A549 (cell line): ENCODE measurements at regions of chr12 and their contacts with region 1.

Region 1: DNA sequence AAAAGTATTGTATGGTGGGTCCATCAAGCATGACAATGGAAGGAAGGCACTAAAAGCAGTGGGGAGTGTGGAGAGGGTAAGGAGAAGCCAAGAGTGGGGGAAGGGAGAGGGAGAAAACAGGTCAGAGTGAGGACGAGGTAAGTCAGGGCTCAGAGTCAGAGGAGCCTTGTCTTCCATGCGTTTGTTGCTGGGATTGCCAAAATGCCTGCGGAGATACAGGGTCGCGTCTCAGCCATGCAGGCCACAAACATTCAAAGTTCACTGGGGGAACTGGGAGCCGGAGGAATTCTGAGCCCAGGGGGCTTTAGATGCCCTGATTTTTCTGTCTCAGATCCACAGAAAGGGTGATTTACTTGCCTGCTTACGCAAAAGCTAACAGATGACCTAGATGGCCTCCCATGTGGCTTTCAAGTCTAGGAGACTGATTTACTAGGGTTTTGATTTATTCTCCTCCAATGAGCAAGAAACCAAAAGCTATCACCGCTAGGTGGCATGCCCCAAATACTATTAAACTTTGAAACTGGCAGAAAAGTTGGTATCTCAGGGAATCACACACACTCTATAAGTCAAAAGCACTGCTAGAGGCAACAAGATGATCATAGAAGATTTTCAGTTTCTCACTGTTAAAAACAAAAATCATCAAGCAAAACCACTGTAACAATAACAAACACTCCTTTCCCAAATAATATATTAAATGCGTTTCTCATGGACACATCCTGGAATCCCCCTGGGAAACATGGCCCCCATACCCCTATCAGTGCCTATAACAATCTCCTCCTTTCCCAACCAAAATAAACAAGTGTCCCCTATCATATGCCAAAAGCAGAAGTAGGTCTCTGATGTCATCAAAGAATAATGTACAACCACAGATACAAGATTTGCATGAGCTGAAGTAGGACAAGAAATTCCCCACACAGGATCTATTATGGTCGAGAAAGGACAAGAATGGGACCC is 26.6 kb upstream of the MDM1 start:
- DNase-seq: peak; percentile 52 to 88
- ATAC-seq: peak; percentile 84 to 92
- H3K4me3 ChIP-seq: no peak overlapping the region
- H3K27ac ChIP-seq: peak overlapping the region; percentile 56 to 70
- H3K4me1 ChIP-seq: peaks cover 13% of the 10 kb centered on the region
- CTCF ChIP-seq: peak; percentile 82
- EP300 ChIP-seq: no peak
- POLR2A ChIP-seq: no peak
- RAD21 ChIP-seq: peak; percentile 83 to 87

Region 2: DNA sequence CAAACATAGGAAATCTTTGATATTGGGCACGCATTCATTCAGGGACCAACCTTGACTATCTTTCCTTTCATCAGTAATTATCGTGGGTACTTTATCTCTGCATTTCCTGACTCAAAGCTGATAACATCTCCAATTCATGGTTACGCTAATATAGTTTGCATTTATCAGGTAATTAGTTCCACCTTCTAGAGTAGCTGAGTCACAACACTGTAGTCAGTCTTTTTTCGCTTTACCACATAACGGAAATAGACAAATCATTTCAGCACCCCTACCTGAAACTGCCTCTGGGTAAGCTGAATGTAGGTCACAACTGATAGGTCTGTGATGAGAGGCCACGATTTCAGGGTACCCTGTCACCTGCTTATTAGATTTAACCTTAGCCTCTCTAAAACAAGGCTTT is 68.7 kb before region 1 on chr12:
- CTCF ChIA-PET with region 1: no interaction called
- POLR2A ChIA-PET with region 1: no interaction called
- DNase-seq: no peak
- ATAC-seq: no peak
- H3K4me3 ChIP-seq: no peak overlapping the region
- H3K27ac ChIP-seq: no peak overlapping the region
- H3K4me1 ChIP-seq: no peaks in the 10 kb centered on the region
- CTCF ChIP-seq: no peak
- EP300 ChIP-seq: no peak
- POLR2A ChIP-seq: no peak
- RAD21 ChIP-seq: no peak

Region 3: DNA sequence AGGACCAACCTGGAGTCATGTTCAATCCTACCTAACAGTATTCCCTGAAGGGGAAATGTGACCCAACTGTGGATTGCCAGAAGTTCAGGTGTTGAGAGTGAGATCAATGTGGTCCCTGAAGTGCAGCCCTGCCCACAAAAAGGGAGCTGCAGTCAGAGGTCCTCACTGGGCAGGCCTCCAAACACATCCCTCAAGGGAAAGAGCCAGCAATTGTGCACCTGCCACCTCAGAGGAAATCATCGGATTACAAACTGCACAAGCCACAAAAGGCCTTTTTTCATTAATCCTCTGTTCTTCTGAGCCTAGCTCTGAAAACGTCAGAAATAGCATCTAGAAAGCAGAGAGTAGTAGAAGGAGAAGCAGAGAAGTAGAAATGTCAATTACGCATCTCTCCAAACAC is 15.8 kb before region 1 on chr12:
- CTCF ChIA-PET with region 1: interaction called, 24 read pairs
- POLR2A ChIA-PET with region 1: no interaction called
- DNase-seq: no peak
- ATAC-seq: no peak
- H3K4me3 ChIP-seq: no peak overlapping the region
- H3K27ac ChIP-seq: no peak overlapping the region
- H3K4me1 ChIP-seq: no peaks in the 10 kb centered on the region
- CTCF ChIP-seq: no peak
- EP300 ChIP-seq: no peak
- POLR2A ChIP-seq: no peak
- RAD21 ChIP-seq: no peak

Region 4: GRCh38 chr12:68610370-68611093 is 251.7 kb after region 1 on chr12 and contains the start of gene RAP1B:
- CTCF ChIA-PET with region 1: interaction called, 16 read pairs
- POLR2A ChIA-PET with region 1: interaction called, 21 read pairs
- DNase-seq: peak; percentile 70 to 91
- ATAC-seq: peak; percentile 95 to 96
- H3K4me3 ChIP-seq: peak within 1 kb of the TSS; percentile 93
- H3K27ac ChIP-seq: peak within 1 kb of the TSS; percentile 85 to 90
- H3K4me1 ChIP-seq: peaks cover 37% of the 10 kb centered on the region
- CTCF ChIP-seq: no peak
- EP300 ChIP-seq: no peak
- POLR2A ChIP-seq: peak; percentile 89
- RAD21 ChIP-seq: peak; percentile 6 to 30; a peak in 1 of 5 replicates
- polyA plus RNA-seq, gene RAP1B: 226 and 305 TPM in 2 replicates